Psoas muscle (tissue), 8 donors: ENCODE measurements at regions of chr16 and their contacts with region 1.

Region 1: DNA sequence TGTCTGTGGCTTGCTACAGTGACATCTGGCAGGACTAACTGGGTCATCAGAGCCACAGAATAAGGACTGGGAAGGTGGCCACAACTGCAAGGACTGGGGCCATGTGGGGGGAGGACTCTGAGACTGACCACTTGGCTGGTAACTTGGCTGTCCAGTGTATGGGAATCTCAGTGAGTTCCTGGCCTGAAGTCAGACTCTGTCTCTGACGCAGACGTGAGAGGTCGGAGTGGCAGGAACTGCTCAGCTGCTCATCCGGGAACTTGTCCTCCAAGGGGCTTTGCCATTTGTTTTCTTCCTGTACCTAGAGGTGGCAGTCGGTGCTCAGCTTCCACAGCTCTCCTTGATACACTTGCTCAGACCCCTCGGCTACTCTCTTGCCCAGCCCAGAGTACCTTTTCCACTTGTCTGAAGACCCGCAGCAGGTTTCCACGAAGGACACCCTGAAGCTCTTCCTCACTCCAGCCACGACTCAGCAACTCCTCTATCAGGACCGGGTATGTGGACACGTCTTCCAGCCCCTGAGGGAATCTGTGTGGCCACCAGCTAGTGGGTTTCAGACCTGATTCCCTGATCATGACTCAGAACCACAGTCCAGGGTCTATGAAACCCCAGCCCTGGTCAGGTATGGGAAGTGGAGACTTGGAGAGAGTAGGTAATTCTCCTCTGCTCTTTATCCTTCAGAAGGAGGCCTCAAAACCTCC is 7.3 kb upstream of the DPEP3 start:
- DNase-seq: peak; percentile 59 to 84
- ATAC-seq: peak; percentile 81 to 87 (median 86)
- H3K4me3 ChIP-seq: peak overlapping the region; percentile 70
- H3K27ac ChIP-seq: peak overlapping the region; percentile 97
- H3K4me1 ChIP-seq: peaks cover 78% of the 10 kb centered on the region
- H3K27me3 ChIP-seq: no peaks in the 10 kb centered on the region
- CTCF ChIP-seq: no peak

Region 2: DNA sequence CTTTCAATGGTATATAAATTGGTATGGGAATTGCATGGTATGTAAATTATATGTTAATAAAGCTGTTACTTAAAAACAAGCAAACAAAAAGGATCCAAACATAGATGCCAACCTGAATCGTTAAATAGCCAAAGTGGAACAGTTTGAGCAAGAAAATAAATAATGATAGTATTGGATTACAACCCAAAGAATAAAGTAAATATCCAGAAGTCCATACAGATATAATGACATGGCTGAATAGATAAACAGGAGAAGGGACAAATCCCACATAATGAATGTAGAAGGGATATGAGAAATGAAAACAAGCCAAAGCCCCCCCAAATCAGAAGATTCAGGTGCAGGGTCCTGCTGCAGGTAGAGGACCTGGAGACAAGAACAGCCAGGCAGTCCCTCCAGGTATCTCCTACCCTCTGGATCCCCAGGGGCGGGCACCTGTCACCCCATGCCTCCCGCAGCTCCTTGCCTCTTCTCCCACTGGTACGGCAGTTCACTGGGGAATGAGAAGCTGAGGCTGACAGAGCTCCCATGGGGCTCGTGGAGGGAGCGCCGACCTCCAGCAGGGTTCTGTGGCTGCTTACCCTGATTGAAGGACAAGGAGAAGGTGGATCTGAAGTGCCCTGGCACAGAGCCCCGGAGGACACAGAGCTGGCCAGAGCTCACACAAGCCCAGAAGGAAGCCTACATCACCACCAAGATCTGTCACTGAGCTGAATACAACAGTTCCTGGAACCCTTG is 33.8 kb before region 1 on chr16:
- intact Hi-C with region 1: no loop called
- DNase-seq: no peak
- ATAC-seq: no peak
- H3K4me3 ChIP-seq: no peak overlapping the region
- H3K27ac ChIP-seq: no peak overlapping the region
- H3K4me1 ChIP-seq: peaks cover 14% of the 10 kb centered on the region
- H3K27me3 ChIP-seq: no peaks in the 10 kb centered on the region
- CTCF ChIP-seq: no peak

Region 3: DNA sequence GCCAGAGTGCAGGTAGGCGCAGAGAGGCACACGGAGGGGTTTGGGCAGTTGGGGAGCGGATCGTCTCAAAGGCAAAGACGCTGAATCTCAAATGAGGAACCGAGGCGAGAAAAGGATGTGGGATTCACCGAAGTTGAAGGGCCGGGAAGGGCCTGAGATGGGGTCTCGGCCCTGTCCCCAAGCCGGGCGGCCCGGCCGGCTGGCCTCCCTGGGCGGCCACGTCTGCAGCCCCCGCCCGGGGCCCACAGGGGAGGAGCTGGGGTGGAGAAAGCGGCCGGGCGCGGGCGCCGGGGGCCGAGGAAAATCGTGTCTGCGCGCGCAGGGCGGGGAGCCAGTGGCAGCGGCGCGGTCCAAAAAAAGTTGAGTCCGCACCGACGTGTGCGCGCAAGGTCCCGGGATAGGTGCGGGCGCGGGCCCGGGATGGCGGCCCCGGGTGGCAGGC is 19.6 kb before region 1 on chr16:
- intact Hi-C with region 1: loop called in 1 of 2 experiments (anchors 2 kb)
- DNase-seq: peak; percentile 60 to 79
- ATAC-seq: peak; percentile 1 to 39 (median 20)
- H3K4me3 ChIP-seq: peak overlapping the region; percentile 88
- H3K27ac ChIP-seq: peak overlapping the region; percentile 91
- H3K4me1 ChIP-seq: peaks cover 45% of the 10 kb centered on the region
- H3K27me3 ChIP-seq: no peaks in the 10 kb centered on the region
- CTCF ChIP-seq: no peak